Mammary epithelial cell (primary cell): ENCODE measurements at regions of chr2 and their contacts with region 1.

Region 1: GRCh38 chr2:75523313-75524275 is 37.1 kb downstream of the EVA1A start:
- DNase-seq: peak; percentile 98
- H3K4me3 ChIP-seq: no peak overlapping the region
- H3K27ac ChIP-seq: no peak overlapping the region
- H3K4me1 ChIP-seq: peaks cover 62% of the 10 kb centered on the region
- H3K27me3 ChIP-seq: no peaks in the 10 kb centered on the region
- CTCF ChIP-seq: no peak

Region 2: GRCh38 chr2:75424936-75425619 is 98.5 kb before region 1 on chr2:
- CTCF ChIA-PET with region 1: no interaction called
- dilution Hi-C with region 1: loop called (anchors 5 kb)
- in situ Hi-C with region 1: no loop called
- intact Hi-C with region 1: no loop called
- DNase-seq: peak; percentile 10
- H3K4me3 ChIP-seq: no peak overlapping the region
- H3K27ac ChIP-seq: no peak overlapping the region
- H3K4me1 ChIP-seq: peaks cover 7% of the 10 kb centered on the region
- H3K27me3 ChIP-seq: no peaks in the 10 kb centered on the region
- CTCF ChIP-seq: peak; percentile 9 to 26

Region 3: DNA sequence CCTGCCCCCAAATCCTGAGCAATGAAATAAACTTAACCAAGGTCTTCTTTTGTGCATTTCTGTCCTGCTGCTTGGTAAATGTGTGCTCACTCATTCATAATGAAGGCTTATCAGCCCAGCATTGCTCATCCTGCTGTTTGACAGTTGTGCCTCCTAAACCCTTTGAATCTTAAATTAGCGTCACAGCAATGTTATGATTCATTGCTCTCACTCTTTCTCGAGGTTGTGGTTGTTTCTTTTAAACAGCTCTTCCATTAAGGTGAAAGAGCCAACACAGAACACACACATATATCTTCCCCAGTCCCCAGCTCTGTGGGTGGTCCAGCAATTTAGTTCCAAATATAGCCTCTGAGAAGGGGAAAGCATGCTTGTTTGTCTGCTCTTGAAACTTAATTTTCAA is 46.8 kb before region 1 on chr2:
- CTCF ChIA-PET with region 1: no interaction called
- dilution Hi-C with region 1: no loop called
- in situ Hi-C with region 1: no loop called
- intact Hi-C with region 1: loop called (anchors 5 kb)
- DNase-seq: peak; percentile 41
- H3K4me3 ChIP-seq: no peak overlapping the region
- H3K27ac ChIP-seq: no peak overlapping the region
- H3K4me1 ChIP-seq: no peaks in the 10 kb centered on the region
- H3K27me3 ChIP-seq: no peaks in the 10 kb centered on the region
- CTCF ChIP-seq: no peak

Region 4: GRCh38 chr2:75560768-75561565 is 37.4 kb after region 1 on chr2 and contains the start of gene EVA1A:
- CTCF ChIA-PET with region 1: no interaction called
- dilution Hi-C with region 1: no loop called
- in situ Hi-C with region 1: no loop called
- intact Hi-C with region 1: loop called (anchors 2 kb)
- DNase-seq: peak; percentile 70
- H3K4me3 ChIP-seq: peak within 1 kb of the TSS; percentile 72 to 77 (median 75)
- H3K27ac ChIP-seq: peak within 1 kb of the TSS; percentile 61
- H3K4me1 ChIP-seq: peaks cover 30% of the 10 kb centered on the region
- H3K27me3 ChIP-seq: no peaks in the 10 kb centered on the region
- CTCF ChIP-seq: no peak
- total RNA-seq, gene EVA1A: 19.2 to 28.7 TPM

Region 5: DNA sequence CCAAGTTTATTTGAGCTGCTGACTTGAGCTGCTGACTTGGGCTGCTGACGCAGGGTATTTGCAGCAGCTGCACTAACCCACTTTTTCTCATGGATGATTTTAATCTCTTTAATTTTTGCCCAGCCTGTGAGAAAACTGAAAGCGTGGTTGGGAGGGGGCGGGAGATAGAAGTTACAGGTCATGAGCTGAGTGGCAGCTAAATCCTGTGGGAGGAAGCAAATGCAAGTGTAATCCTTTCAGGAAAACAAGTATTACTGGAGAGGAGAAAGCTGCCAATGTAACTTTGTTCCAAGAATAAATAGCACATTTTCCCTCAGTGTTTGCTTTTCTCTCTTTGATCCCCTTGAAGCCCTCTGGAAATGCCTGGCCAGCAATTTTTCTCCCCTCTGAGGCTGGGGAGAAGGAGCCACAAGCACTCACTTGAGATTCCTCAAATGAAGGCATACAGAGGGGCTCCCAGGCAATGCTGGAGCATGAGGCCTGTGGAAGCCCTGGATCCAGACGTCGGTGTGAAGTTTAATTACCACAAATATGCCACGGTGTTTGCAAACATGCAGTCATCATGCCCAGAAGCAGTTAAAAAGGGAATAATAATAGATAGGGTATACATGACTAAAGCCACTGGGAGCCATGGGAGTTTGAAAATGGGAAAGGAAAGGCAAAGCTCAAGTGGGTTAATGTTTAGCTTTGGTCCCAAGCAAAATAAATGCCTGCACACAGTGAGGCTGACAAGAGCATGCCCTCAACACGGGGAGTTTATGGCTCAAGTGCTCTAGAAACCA is 47.5 kb after region 1 on chr2:
- CTCF ChIA-PET with region 1: no interaction called
- dilution Hi-C with region 1: loop called (anchors 5 kb)
- in situ Hi-C with region 1: no loop called
- intact Hi-C with region 1: no loop called
- DNase-seq: no peak
- H3K4me3 ChIP-seq: no peak overlapping the region
- H3K27ac ChIP-seq: no peak overlapping the region
- H3K4me1 ChIP-seq: peaks cover 49% of the 10 kb centered on the region
- H3K27me3 ChIP-seq: no peaks in the 10 kb centered on the region
- CTCF ChIP-seq: no peak

Region 6: DNA sequence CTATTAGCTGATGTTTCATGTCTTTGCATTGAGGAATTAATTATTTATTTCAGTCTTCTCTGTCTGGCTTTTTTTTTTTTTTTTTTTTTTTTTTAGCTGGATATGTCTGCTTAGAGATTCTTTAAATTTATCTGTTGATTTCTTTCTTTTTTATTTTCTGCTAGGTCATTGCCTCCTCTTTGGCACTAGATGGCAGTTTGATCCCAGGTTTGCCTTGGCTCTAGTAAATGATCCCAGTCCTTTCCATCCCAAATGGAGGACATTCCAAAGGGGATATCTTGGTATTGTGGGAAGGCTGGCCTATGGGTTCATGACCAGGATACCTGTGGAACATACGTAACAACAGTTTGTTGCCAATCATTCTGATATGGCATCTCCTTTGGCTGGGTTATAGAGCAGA is 526.6 kb after region 1 on chr2:
- CTCF ChIA-PET with region 1: no interaction called
- dilution Hi-C with region 1: no loop called
- in situ Hi-C with region 1: no loop called
- intact Hi-C with region 1: no loop called
- DNase-seq: no peak
- H3K4me3 ChIP-seq: no peak overlapping the region
- H3K27ac ChIP-seq: no peak overlapping the region
- H3K4me1 ChIP-seq: no peaks in the 10 kb centered on the region
- H3K27me3 ChIP-seq: no peaks in the 10 kb centered on the region
- CTCF ChIP-seq: no peak